Vagina (tissue), 2 donors: ENCODE measurements at regions of chr9 and their contacts with region 1.

Region 1: DNA sequence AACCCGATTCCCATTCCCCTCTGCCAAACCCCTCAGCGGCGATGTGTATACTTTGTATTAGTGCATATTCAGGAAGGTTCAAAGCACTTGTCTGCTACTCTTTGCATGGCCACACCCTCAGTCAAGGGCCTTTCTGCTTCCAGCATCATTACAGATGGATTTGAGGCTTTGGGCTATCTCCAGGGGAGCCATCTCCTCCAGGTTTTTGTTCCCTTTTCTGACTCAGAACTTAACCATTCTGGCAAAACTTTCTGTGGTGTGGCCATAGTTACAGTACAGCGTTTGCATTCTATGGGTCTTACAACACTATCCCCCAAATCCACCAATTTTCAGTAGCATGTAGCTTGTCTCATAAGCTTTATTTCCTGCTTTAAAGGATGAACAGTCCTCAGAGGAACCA is 36.0 kb upstream of the SVEP1 start:
- DNase-seq: no peak
- H3K4me3 ChIP-seq: no peak overlapping the region
- H3K27ac ChIP-seq: no peak overlapping the region
- H3K4me1 ChIP-seq: no peaks in the 10 kb centered on the region
- H3K27me3 ChIP-seq: no peaks in the 10 kb centered on the region
- CTCF ChIP-seq: no peak
- POLR2A ChIP-seq: no peak

Region 2: GRCh38 chr9:109379513-109379912 is 1236.0 kb before region 1 on chr9:
- intact Hi-C with region 1: loop called (anchors 5 kb)
- DNase-seq: no peak
- H3K4me3 ChIP-seq: no peak overlapping the region
- H3K27ac ChIP-seq: no peak overlapping the region
- H3K4me1 ChIP-seq: no peaks in the 10 kb centered on the region
- H3K27me3 ChIP-seq: no peaks in the 10 kb centered on the region
- CTCF ChIP-seq: no peak
- POLR2A ChIP-seq: no peak

Region 3: GRCh38 chr9:110579034-110579861 is 36.2 kb before region 1 on chr9 and contains the start of gene SVEP1:
- intact Hi-C with region 1: no loop called
- DNase-seq: no peak
- H3K4me3 ChIP-seq: peak within 1 kb of the TSS; percentile 56 to 58
- H3K27ac ChIP-seq: peak within 1 kb of the TSS; percentile 73
- H3K4me1 ChIP-seq: peaks cover 8% of the 10 kb centered on the region
- H3K27me3 ChIP-seq: no peaks in the 10 kb centered on the region
- CTCF ChIP-seq: no peak
- POLR2A ChIP-seq: no peak
- total RNA-seq, gene SVEP1: 84.5 TPM

Region 4: DNA sequence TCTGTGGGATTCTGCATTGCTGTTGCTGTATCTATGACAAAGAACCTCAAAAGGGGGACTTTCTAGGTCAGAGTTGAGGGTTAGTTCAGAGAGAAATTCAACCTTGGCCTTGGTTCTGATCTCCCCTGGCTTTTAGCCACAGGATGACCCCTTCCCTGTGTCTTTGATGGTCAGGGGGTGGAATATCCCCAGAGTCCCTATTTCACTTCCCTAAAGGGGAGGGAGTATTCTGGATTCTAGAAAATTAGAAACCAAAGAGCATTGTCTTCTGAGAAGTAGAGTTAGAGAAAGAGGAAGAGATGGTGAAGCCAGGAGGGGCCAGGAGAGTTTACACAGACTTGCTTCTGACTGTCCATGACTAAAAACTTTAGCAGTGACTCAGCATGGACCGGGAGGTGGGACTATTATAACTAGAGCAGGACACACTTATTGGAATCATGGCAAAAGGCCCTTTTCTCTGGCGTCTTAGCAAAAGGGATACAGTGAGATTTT is 479.0 kb after region 1 on chr9:
- intact Hi-C with region 1: no loop called
- DNase-seq: no peak
- H3K4me3 ChIP-seq: no peak overlapping the region
- H3K27ac ChIP-seq: peak overlapping the region; percentile 71
- H3K4me1 ChIP-seq: peaks cover 12% of the 10 kb centered on the region
- H3K27me3 ChIP-seq: no peaks in the 10 kb centered on the region
- CTCF ChIP-seq: no peak
- POLR2A ChIP-seq: no peak